ENCODE measurements at regions of chr17 and their contacts with region 1.

Region 1: GRCh38 chr17:38674749-38675615 is at the start of gene EPOP:
- DNase-seq: peak; percentile 99
- H3K4me3 ChIP-seq: peak within 1 kb of the TSS; percentile 71 to 77
- H3K27ac ChIP-seq: peak within 1 kb of the TSS in 1 of 2 experiments; percentile 64; a peak in 2 of 4 replicates
- H3K4me1 ChIP-seq: peaks cover 0 to 19% of the 10 kb centered on the region in 2 experiments; a peak in 1 of 4 replicates
- H3K27me3 ChIP-seq: no peaks in the 10 kb centered on the region
- CTCF ChIP-seq: no peak
- EP300 ChIP-seq: no peak
- RAD21 ChIP-seq: no peak
- polyA plus RNA-seq, gene EPOP: 2.7 and 3.1 TPM in 2 replicates

Region 2: DNA sequence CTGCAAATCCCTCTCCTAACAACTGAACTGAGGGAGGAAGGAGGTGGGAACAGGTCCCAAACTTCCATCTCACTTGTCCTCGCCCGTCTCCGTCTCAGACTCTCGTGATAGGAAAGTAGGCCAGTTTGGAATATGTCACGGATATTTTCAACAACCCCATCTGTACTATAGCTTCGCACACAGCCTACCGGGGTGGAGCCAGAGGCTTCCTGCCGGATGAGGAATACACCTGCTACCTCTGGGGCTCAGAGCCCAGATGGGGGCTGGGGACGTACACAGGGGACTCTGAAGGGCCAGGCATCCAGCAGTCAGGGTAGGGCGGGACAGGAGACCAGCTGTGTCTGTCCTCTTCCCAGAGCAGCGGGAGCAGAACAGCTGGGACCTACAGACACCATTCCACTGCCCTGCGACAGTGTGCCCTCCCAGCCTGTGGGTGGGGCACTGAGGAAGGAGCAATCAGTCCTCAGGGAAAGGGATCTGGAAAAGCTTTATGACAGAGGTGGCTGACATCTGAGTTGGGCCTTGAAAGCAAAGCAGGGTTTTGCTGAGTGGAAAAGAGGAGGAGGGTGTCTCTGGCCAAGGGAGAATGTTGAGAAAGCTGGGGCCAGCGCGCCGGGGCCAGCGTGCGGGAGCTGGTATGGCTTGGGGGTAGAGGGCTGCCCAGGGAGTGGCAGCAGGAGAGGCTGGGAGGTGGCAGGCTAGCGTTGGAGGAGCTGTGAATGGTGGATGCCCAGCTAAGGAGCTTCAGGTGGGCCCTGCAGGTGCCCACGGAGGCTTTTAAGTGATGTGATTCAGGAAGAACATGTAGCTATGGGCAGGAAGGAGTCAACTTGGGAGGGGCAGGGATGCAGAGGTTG is 57.7 kb before region 1 on chr17:
- CTCF ChIA-PET with region 1: no interaction called
- POLR2A ChIA-PET with region 1: no interaction called
- DNase-seq: no peak
- H3K4me3 ChIP-seq: no peak overlapping the region
- H3K27ac ChIP-seq: no peak overlapping the region
- H3K4me1 ChIP-seq: no peaks in the 10 kb centered on the region; a peak in 1 of 4 replicates
- H3K27me3 ChIP-seq: peaks cover 10% of the 10 kb centered on the region; the same call in 1 of the 2 replicates
- CTCF ChIP-seq: no peak
- EP300 ChIP-seq: no peak
- RAD21 ChIP-seq: no peak

Region 3: GRCh38 chr17:38687286-38687685 is 12.3 kb after region 1 on chr17:
- CTCF ChIA-PET with region 1: interaction called, 18 read pairs
- POLR2A ChIA-PET with region 1: no interaction called
- DNase-seq: no peak
- H3K4me3 ChIP-seq: no peak overlapping the region
- H3K27ac ChIP-seq: no peak overlapping the region
- H3K4me1 ChIP-seq: no peaks in the 10 kb centered on the region
- H3K27me3 ChIP-seq: no peaks in the 10 kb centered on the region
- CTCF ChIP-seq: no peak
- EP300 ChIP-seq: no peak
- RAD21 ChIP-seq: no peak

Region 4: GRCh38 chr17:38702166-38702899 is 27.4 kb after region 1 on chr17:
- CTCF ChIA-PET with region 1: interaction called, 10 read pairs
- POLR2A ChIA-PET with region 1: interaction called, 5 read pairs
- DNase-seq: peak; percentile 94
- H3K4me3 ChIP-seq: peak overlapping the region; percentile 71 to 81
- H3K27ac ChIP-seq: peak overlapping the region; percentile 71 to 86
- H3K4me1 ChIP-seq: peaks cover 10 to 36% of the 10 kb centered on the region in 2 experiments; a peak in 2 of 4 replicates
- H3K27me3 ChIP-seq: no peaks in the 10 kb centered on the region
- CTCF ChIP-seq: no peak
- EP300 ChIP-seq: peak in 1 of 2 experiments; percentile 26; a peak in 1 of 4 replicates
- RAD21 ChIP-seq: no peak

Region 5: GRCh38 chr17:38724337-38724988 is 49.5 kb after region 1 on chr17:
- CTCF ChIA-PET with region 1: interaction called, 18 read pairs
- POLR2A ChIA-PET with region 1: interaction called, 3 read pairs
- DNase-seq: peak; percentile 94
- H3K4me3 ChIP-seq: no peak overlapping the region; a peak in 1 of 4 replicates
- H3K27ac ChIP-seq: peak overlapping the region; percentile 32 to 95; a peak in 3 of 4 replicates
- H3K4me1 ChIP-seq: peaks cover 7 to 41% of the 10 kb centered on the region in 2 experiments; a peak in 1 of 4 replicates
- H3K27me3 ChIP-seq: no peaks in the 10 kb centered on the region
- CTCF ChIP-seq: no peak
- EP300 ChIP-seq: peak in 1 of 2 experiments; percentile 58; a peak in 1 of 4 replicates
- RAD21 ChIP-seq: 0 out of 2 replicates have a peak, but pooled peaks have one; percentile 3

Region 6: GRCh38 chr17:38735161-38735997 is 60.4 kb after region 1 on chr17:
- CTCF ChIA-PET with region 1: interaction called, 93 read pairs
- POLR2A ChIA-PET with region 1: interaction called, 7 read pairs
- DNase-seq: peak; percentile 92
- H3K4me3 ChIP-seq: no peak overlapping the region; a peak in 2 of 4 replicates
- H3K27ac ChIP-seq: peak overlapping the region in 1 of 2 experiments; percentile 71; a peak in 3 of 4 replicates
- H3K4me1 ChIP-seq: peaks cover 8 to 58% of the 10 kb centered on the region in 2 experiments; a peak in 1 of 4 replicates
- H3K27me3 ChIP-seq: no peaks in the 10 kb centered on the region
- CTCF ChIP-seq: peak; percentile 95
- EP300 ChIP-seq: no peak
- RAD21 ChIP-seq: peak; percentile 75